Activated B cell treated with CpG ODN at 0.5 μM for 24 hours (primary cell): ENCODE measurements at regions of chr10 and their contacts with region 1.

Region 1: DNA sequence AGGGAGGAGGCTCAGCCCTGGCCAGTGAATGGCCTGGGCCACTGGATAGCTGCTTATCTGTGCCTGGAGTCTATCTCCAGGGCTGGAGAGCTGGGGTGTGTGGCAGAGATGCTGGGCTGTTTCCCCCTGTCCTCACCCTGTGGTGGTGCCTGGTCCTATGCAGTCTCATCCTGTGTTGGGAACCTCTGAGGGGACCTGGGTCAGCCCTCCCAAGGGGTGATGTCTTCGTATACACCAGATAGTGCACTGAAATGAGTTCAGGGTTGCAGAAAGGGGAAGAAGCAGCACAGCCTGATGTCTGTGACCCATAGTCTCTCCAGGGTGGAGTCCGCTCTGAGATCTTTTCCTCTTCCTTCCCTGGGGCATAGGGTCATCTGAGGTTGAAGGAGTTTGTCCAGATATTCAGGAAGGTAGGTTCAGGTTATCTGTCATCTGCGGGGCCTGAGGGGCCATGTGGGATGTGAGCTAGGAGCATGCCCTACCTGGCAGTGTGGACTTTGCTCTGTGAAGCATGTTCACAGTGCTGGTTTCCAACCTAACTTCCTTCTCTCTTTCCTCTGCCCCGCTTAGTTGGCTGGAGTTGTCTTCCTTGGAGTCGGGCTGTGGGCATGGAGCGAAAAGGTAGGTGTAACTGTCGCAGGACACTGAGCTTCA is 33.4 kb upstream of the SH2D4B start:
- DNase-seq: no peak
- ATAC-seq: no peak
- H3K4me3 Mint-ChIP-seq: no peak overlapping the region
- H3K27ac Mint-ChIP-seq: peak overlapping the region; percentile 46
- H3K4me1 Mint-ChIP-seq: peaks cover 63% of the 10 kb centered on the region
- H3K27me3 Mint-ChIP-seq: no peaks in the 10 kb centered on the region
- CTCF ChIP-seq: no peak

Region 2: GRCh38 chr10:80253266-80254245 is 250.7 kb before region 1 on chr10:
- CTCF ChIA-PET with region 1: no interaction called
- POLR2A ChIA-PET with region 1: no interaction called
- intact Hi-C with region 1: no loop called
- DNase-seq: no peak
- ATAC-seq: no peak
- H3K4me3 Mint-ChIP-seq: no peak overlapping the region
- H3K27ac Mint-ChIP-seq: no peak overlapping the region
- H3K4me1 Mint-ChIP-seq: no peaks in the 10 kb centered on the region
- H3K27me3 Mint-ChIP-seq: peaks cover 6% of the 10 kb centered on the region
- CTCF ChIP-seq: no peak

Region 3: DNA sequence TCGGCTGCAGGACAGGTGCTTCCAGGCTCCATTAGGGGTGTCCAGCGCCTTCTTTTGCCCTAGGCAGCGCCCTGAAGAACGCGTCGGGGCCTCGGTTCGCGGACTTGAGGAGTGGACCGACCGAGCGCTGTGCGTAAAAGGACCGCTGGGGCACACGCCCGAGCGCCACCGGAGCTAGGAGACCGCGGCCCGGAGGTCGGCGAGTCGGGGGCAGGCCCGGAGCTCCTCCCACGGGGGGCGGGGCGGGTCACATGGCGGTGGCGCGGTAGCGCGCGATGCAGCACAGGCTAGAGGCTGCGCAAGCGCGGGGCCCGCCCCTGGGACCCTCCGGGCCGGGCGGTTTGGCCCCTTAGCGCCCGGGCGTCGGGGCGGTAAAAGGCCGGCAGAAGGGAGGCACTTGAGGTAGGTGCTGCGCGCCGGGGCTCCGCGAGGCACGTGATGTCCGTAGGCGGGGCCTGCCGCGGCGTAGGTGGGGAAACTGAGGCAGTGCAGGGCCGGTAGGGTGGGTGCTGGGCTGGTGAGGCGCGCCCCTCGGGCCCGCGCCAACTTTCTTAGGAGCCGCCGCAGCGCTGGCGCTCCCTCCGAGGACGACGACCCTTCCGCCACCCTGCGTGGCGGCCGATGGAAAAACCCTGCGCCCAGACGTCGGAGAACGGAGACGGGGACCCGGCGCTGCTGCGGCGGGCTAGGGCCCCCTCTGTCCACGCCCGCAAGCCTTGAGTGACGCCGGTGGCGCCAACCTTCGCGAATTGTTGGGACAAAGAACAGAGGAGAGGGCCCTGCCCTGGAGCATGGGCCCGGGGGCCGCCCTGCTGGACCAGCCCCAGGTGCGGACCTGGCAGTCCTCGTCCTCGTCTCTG is 95.8 kb before region 1 on chr10 and contains the start of gene PRXL2A:
- CTCF ChIA-PET with region 1: interaction called, 11 read pairs
- POLR2A ChIA-PET with region 1: interaction called, 9 read pairs
- intact Hi-C with region 1: loop called (anchors 1 kb)
- DNase-seq: peak; percentile 87
- ATAC-seq: peak; percentile 97
- H3K4me3 Mint-ChIP-seq: peak within 1 kb of the TSS; percentile 91
- H3K27ac Mint-ChIP-seq: peak within 1 kb of the TSS; percentile 82
- H3K4me1 Mint-ChIP-seq: peaks cover 12% of the 10 kb centered on the region
- H3K27me3 Mint-ChIP-seq: peaks cover 2% of the 10 kb centered on the region
- CTCF ChIP-seq: no peak
- total RNA-seq, gene PRXL2A: 8.5 and 10.3 TPM in 2 replicates

Region 4: GRCh38 chr10:80444646-80445319 is 59.5 kb before region 1 on chr10:
- CTCF ChIA-PET with region 1: interaction called, 160 read pairs
- POLR2A ChIA-PET with region 1: interaction called, 21 read pairs
- intact Hi-C with region 1: loop called (anchors 1 kb)
- DNase-seq: no peak
- ATAC-seq: peak; percentile 89
- H3K4me3 Mint-ChIP-seq: no peak overlapping the region
- H3K27ac Mint-ChIP-seq: peak overlapping the region; percentile 24
- H3K4me1 Mint-ChIP-seq: peaks cover 7% of the 10 kb centered on the region
- H3K27me3 Mint-ChIP-seq: no peaks in the 10 kb centered on the region
- CTCF ChIP-seq: no peak

Region 5: DNA sequence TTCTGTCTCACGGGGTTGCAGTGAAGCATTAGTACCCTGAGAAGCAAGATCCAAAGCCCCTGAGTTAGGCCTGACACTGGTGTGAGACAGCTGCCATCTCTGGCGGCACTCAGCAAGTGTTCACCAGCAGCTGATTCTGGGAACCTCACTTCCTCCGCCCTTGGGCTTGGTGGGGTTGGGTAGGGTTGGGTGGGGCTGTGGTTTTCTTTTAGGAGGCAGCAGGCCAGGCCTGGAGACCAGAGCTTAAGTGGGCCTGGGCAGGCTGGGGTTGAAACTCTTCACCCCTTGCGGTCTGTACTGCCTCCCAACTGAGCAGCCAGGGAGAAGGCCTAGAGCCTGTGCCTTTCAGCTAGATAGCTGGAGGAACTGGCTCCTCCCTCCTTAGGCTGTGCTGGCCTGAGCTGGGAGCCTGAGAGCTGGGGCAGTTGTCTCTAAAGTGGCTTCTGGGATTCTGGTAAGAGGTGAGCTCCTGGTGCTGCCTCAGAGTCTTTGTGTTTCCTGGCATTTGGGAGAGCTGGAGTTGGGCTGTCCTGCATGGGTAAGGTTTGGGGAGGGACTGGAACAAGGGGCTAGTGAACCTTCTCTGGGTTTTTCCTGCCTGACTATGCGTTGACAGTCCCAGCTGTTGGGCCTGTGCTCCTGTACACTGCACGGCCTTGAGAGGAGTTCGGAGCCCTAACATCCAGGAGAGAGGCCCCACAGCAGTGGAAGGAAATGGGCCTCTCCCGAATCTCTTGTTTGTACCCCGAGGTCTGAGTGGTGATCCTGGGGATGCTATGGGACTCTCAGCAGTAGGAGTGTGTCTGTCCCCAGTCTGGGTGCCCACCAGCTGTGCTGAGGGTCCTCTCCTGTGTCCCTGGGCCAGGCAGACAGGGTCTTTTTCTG is 45.0 kb before region 1 on chr10:
- CTCF ChIA-PET with region 1: interaction called, 19 read pairs
- POLR2A ChIA-PET with region 1: interaction called, 9 read pairs
- intact Hi-C with region 1: loop called (anchors 1 kb)
- DNase-seq: peak; percentile 27
- ATAC-seq: peak; percentile 33
- H3K4me3 Mint-ChIP-seq: peak overlapping the region; percentile 51
- H3K27ac Mint-ChIP-seq: peak overlapping the region; percentile 76
- H3K4me1 Mint-ChIP-seq: peaks cover 92% of the 10 kb centered on the region
- H3K27me3 Mint-ChIP-seq: no peaks in the 10 kb centered on the region
- CTCF ChIP-seq: no peak

Region 6: GRCh38 chr10:80493522-80494051 is 10.7 kb before region 1 on chr10:
- CTCF ChIA-PET with region 1: interaction called, 6 read pairs
- POLR2A ChIA-PET with region 1: interaction called, 5 read pairs
- intact Hi-C with region 1: loop called (anchors 1 kb)
- DNase-seq: no peak
- ATAC-seq: peak; percentile 37
- H3K4me3 Mint-ChIP-seq: peak overlapping the region; percentile 9
- H3K27ac Mint-ChIP-seq: no peak overlapping the region
- H3K4me1 Mint-ChIP-seq: peaks cover 57% of the 10 kb centered on the region
- H3K27me3 Mint-ChIP-seq: no peaks in the 10 kb centered on the region
- CTCF ChIP-seq: no peak

Region 7: GRCh38 chr10:80612261-80612660 is 108.0 kb after region 1 on chr10:
- CTCF ChIA-PET with region 1: no interaction called
- POLR2A ChIA-PET with region 1: no interaction called
- intact Hi-C with region 1: no loop called
- DNase-seq: no peak
- ATAC-seq: no peak
- H3K4me3 Mint-ChIP-seq: no peak overlapping the region
- H3K27ac Mint-ChIP-seq: no peak overlapping the region
- H3K4me1 Mint-ChIP-seq: no peaks in the 10 kb centered on the region
- H3K27me3 Mint-ChIP-seq: peaks cover 5% of the 10 kb centered on the region
- CTCF ChIP-seq: no peak

Region 8: DNA sequence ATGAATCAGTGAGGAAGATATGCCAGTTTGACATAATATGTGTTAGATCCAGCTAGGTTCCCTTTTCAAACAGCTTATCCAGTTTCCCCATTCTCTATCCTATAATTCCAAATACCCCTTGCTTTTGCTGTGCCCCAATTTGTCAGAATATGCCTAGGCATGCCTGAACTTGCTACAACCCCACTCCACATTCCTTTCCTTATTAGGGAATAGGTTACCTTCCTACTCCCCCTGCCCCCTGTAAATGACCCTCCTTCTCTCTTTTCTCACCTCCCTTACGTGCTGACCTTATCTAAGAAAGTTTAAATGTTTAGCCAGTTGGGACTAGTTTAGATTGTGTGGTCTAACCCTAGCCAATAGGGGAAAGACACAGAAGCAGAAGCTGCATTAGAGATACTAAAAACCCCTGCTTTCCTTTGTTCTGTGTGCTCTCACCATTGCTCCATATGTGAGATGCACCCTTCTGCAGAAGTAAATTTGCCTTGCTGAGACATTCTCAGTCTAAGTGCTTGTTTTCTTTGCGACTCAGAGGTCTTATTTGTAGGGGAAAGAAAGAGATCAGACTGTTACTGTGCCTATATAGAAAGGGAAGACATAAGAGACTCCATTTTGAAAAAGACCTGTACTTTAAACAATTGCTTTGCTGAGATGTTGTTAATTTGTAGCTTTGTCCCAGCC is 301.2 kb after region 1 on chr10:
- CTCF ChIA-PET with region 1: no interaction called
- POLR2A ChIA-PET with region 1: no interaction called
- intact Hi-C with region 1: no loop called
- DNase-seq: no peak
- ATAC-seq: no peak
- H3K4me3 Mint-ChIP-seq: no peak overlapping the region
- H3K27ac Mint-ChIP-seq: no peak overlapping the region
- H3K4me1 Mint-ChIP-seq: no peaks in the 10 kb centered on the region
- H3K27me3 Mint-ChIP-seq: peaks cover 2% of the 10 kb centered on the region
- CTCF ChIP-seq: no peak